Keratinocyte (primary cell): ENCODE measurements at regions of chr16 and their contacts with region 1.

Region 1: DNA sequence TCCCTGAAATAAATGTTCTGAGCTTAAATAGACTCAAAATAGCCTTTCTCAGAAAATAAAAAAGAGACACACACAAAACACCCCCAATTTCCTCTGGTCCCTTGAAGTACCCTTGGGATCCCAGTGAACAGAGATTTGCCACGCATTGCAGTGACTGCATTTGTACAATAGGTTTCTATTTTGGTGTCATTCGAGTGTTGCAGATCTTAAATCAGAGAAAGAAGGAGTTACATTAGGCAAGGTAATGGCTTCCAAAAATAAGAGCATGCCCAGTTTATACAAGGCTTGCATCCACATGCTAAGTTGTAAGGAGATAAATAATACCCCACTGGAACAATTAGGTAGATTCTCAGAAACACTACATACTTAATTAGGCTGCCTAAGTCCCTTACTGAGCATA is 2.2 kb downstream of the TOX3 start:
- DNase-seq: no peak
- H3K4me3 ChIP-seq: no peak overlapping the region
- H3K27ac ChIP-seq: no peak overlapping the region
- H3K4me1 ChIP-seq: peaks cover 2% of the 10 kb centered on the region
- H3K27me3 ChIP-seq: peaks cover 45% of the 10 kb centered on the region
- CTCF ChIP-seq: no peak

Region 2: DNA sequence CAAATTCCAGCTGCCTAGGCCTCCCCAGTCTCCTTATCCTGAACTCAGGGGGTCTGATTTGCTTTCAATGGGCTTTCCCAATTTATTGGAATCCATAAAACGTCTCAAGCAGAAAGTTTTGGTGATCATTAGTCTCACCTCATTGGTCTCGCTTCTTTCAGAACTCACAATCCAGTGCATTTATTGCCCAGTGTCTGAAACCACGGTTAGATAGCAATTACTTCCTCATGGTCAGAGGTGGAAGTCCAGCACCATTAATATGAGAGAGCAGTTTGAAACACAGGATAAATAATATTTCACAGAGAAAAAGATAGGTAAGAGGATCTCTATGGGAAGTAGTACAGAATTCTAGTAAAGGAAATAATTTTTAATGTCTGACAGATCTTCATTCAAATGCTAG is 126.5 kb before region 1 on chr16:
- dilution Hi-C with region 1: no loop called
- DNase-seq: no peak
- H3K4me3 ChIP-seq: no peak overlapping the region
- H3K27ac ChIP-seq: no peak overlapping the region
- H3K4me1 ChIP-seq: no peaks in the 10 kb centered on the region
- H3K27me3 ChIP-seq: no peaks in the 10 kb centered on the region
- CTCF ChIP-seq: no peak

Region 3: DNA sequence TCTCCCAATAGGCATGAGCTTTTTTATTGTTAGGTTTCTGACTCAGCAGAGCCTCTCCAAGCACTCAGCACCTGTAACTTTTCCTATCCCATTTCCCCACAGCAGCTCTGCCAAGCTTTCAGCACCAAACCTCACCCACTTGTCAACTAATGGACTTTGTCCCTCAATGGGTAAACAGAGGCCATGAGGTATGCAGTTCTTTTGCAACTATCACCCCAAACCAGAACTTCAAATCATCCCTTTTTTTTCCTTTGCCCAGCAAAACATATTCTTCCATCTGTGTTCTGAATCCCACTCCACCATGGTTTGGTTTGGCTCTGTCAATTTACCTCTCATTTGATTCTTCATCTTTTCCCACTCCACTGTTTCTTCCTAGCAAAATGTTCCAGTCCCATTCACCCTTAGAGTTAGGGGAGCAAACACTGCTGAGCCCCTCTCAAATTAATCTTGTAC is 55.8 kb before region 1 on chr16:
- dilution Hi-C with region 1: loop called (anchors 5 kb)
- DNase-seq: no peak
- H3K4me3 ChIP-seq: no peak overlapping the region
- H3K27ac ChIP-seq: no peak overlapping the region
- H3K4me1 ChIP-seq: no peaks in the 10 kb centered on the region
- H3K27me3 ChIP-seq: no peaks in the 10 kb centered on the region
- CTCF ChIP-seq: no peak